ENCODE measurements at regions of chr12 and their contacts with region 1.

Region 1: DNA sequence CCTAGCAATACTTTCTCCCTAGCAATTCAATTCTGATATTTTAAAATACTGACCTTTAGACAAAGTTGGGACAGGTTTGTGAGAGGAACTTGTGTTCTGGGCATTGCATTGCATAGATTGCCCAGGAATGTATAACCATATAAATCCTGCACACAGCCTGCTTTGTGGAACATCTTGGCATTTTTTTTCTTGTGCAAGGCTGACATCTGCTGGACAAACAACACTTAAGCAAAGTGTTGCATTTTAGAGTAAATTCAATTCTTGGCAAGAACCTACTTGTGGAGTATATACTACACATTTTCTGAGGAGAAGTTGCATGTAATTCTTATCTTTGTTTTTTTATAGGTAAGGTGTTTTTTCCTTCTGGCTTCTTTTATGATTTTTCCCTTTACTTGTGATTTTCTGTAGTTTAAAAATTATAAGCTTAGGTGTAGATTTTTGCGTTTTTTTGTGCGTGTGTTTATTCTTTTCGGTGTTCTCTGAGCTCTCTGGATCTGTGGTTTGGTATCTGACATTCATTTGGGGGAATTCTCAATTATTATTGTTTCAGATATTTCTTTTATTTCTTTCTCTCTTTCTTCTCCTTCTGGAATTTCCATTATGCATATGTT is 26.4 kb downstream of the TESPA1 start:
- DNase-seq: peak; percentile 34 to 63 (median 61)
- H3K4me3 ChIP-seq: no peak overlapping the region
- H3K4me3 Mint-ChIP-seq: no peak overlapping the region
- H3K27ac ChIP-seq: no peak overlapping the region
- H3K27ac Mint-ChIP-seq: no peak overlapping the region
- H3K4me1 ChIP-seq: peaks cover 15 to 21% of the 10 kb centered on the region in 2 donors
- H3K4me1 Mint-ChIP-seq: peaks cover 25% of the 10 kb centered on the region
- H3K27me3 ChIP-seq: no peaks in the 10 kb centered on the region
- H3K27me3 Mint-ChIP-seq: peaks cover 0 to 3% (median 0%) of the 10 kb centered on the region in 3 donors
- CTCF ChIP-seq: peak; percentile 86

Region 2: GRCh38 chr12:54631988-54632728 is 326.0 kb before region 1 on chr12:
- intact Hi-C with region 1: no loop called
- DNase-seq: no peak
- H3K4me3 ChIP-seq: no peak overlapping the region
- H3K4me3 Mint-ChIP-seq: peak overlapping the region in 1 of 2 donors; percentile 11
- H3K27ac ChIP-seq: no peak overlapping the region
- H3K27ac Mint-ChIP-seq: peak overlapping the region in 1 of 7 donors; percentile 9
- H3K4me1 ChIP-seq: no peaks in the 10 kb centered on the region
- H3K4me1 Mint-ChIP-seq: peaks cover 4% of the 10 kb centered on the region
- H3K27me3 ChIP-seq: no peaks in the 10 kb centered on the region
- H3K27me3 Mint-ChIP-seq: peaks cover 3 to 10% (median 4%) of the 10 kb centered on the region in 3 donors
- CTCF ChIP-seq: no peak

Region 3: DNA sequence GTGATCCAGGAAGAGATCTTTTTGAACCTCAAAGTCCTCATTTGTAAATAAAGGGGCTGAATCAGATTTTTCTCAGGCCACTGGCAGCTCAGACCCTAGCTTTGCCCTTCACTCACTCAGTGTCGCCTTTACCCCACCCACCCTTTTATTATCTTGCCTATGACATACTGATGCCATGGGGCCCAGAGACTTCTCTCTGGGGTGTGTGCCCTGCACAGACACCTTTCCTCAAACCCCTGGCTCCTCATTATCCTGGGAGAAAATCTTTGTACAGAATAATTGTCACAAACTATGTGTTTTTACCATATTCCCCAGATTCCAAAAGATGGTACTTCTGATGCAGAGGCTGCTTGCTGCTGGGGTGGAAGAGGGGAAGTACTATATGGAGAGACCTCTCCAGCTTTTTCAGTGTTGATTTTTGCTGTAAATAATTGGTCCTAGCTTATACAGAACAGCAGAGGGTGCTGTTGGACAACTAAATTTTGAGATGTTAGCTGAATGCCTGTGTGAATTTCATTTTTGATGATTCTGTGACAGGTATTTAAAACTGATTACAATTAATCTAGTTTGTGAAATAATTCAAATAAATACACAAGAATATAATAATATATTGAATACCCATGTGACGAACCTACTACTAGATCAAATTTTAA is 256.1 kb before region 1 on chr12:
- intact Hi-C with region 1: loop called (anchors 5 kb)
- DNase-seq: peak; percentile 38 to 65 (median 56)
- H3K4me3 ChIP-seq: no peak overlapping the region
- H3K4me3 Mint-ChIP-seq: no peak overlapping the region
- H3K27ac ChIP-seq: no peak overlapping the region
- H3K27ac Mint-ChIP-seq: peak overlapping the region in 1 of 7 donors; percentile 7
- H3K4me1 ChIP-seq: peaks cover 6 to 9% of the 10 kb centered on the region in 2 donors
- H3K4me1 Mint-ChIP-seq: peaks cover 8% of the 10 kb centered on the region
- H3K27me3 ChIP-seq: no peaks in the 10 kb centered on the region
- H3K27me3 Mint-ChIP-seq: peaks cover 0 to 2% (median 2%) of the 10 kb centered on the region in 3 donors
- CTCF ChIP-seq: peak; percentile 80

Region 4: DNA sequence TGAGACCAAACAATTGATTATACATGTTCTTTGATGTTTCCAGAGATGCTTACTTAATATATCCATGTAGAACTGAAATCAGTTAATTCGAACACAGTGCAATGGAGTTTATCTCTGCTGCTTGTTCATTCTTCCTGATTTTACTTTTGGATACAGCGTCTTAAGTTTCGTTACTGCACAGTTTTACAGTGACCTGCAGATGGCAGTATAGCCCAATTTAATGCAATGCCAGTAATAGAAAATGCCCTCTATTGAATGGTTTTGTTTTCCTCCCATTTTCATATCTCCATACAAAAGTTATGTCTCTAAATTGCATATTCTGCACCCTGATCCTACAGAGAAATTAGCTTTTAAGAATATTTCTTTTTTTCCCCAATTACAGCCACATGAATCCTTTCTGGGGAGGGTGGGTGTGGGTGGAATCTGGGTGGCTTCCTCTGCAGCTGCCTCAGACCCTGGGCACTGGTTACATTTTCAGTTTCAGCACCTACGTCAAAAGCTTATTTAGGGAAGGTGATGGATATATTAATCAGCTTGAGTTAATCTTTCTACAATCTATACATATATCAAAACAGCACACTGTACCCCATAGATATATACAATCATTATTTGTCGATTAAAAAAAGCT is 208.8 kb before region 1 on chr12:
- intact Hi-C with region 1: loop called (anchors 2 to 5 kb)
- DNase-seq: peak; percentile 44 to 71 (median 57)
- H3K4me3 ChIP-seq: no peak overlapping the region
- H3K4me3 Mint-ChIP-seq: no peak overlapping the region
- H3K27ac ChIP-seq: no peak overlapping the region
- H3K27ac Mint-ChIP-seq: no peak overlapping the region
- H3K4me1 ChIP-seq: peaks cover 0 to 11% of the 10 kb centered on the region in 2 donors
- H3K4me1 Mint-ChIP-seq: peaks cover 11% of the 10 kb centered on the region
- H3K27me3 ChIP-seq: no peaks in the 10 kb centered on the region
- H3K27me3 Mint-ChIP-seq: peaks cover 0 to 4% (median 0%) of the 10 kb centered on the region in 3 donors
- CTCF ChIP-seq: peak; percentile 78

Region 5: GRCh38 chr12:54853995-54854566 is 104.1 kb before region 1 on chr12 and contains the start of gene MUCL1:
- intact Hi-C with region 1: loop called (anchors 2 to 5 kb)
- DNase-seq: peak; percentile 58 to 79 (median 74)
- H3K4me3 ChIP-seq: no peak within 1 kb of the TSS
- H3K4me3 Mint-ChIP-seq: no peak within 1 kb of the TSS
- H3K27ac ChIP-seq: no peak within 1 kb of the TSS
- H3K27ac Mint-ChIP-seq: peak within 1 kb of the TSS in 1 of 7 donors; percentile 68
- H3K4me1 ChIP-seq: peaks cover 14% of the 10 kb centered on the region in 2 donors
- H3K4me1 Mint-ChIP-seq: peaks cover 29% of the 10 kb centered on the region
- H3K27me3 ChIP-seq: no peaks in the 10 kb centered on the region
- H3K27me3 Mint-ChIP-seq: no peaks in the 10 kb centered on the region
- CTCF ChIP-seq: peak; percentile 96
- polyA plus RNA-seq, gene MUCL1: not detected

Region 6: GRCh38 chr12:55051197-55051933 is 93.2 kb after region 1 on chr12:
- intact Hi-C with region 1: no loop called
- DNase-seq: no peak
- H3K4me3 ChIP-seq: no peak overlapping the region
- H3K4me3 Mint-ChIP-seq: no peak overlapping the region
- H3K27ac ChIP-seq: no peak overlapping the region
- H3K27ac Mint-ChIP-seq: no peak overlapping the region
- H3K4me1 ChIP-seq: no peaks in the 10 kb centered on the region
- H3K4me1 Mint-ChIP-seq: no peaks in the 10 kb centered on the region
- H3K27me3 ChIP-seq: no peaks in the 10 kb centered on the region
- H3K27me3 Mint-ChIP-seq: peaks cover 0 to 2% (median 0%) of the 10 kb centered on the region in 3 donors
- CTCF ChIP-seq: no peak